Dorsolateral prefrontal cortex (tissue), 120 donors: ENCODE measurements at regions of chr12 and their contacts with region 1.

Region 1: DNA sequence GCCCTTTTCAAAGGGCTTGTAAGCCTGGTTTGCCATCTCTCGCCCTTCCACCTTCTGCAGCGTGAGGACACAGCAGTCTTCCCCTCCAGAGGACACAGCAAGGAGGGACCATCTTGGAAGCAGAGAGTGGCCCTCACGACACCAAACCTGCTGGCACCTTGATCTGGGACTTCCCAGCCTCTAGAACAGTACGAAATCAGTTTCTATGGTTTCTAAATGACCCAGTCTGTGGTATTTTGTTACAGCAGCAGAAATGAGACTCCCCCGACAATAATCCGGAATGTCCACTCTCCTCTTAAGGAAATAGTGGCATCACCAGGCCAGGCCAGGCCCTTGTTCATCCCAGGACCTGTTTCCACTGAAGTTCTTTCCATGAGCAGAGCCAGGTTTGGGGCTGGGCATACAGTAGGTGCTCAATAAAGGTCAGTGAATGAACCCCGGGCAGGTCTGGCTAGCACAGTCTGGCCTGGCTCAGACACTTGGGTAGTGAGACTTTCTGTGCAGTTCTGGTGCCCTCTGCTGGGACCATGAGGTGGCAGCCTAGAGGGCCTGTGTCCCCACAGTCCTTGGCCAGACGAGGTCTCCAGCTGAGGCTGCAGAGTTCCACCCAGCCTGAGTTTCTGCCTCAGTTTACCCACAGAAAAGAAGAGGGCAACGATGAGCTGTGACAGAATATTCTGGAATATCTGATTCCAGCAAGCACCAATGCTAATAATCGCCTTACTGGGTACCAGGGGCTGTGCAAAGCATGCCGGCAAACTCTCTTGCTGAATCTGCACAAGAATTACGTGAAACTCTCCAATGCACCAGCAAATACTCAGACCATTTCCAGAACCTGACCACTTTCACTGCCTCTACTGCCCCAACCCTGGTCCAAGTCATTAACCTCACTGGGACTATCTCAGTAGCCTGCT is 14.0 kb downstream of the ABCB9 start:
- DNase-seq: peak; percentile 65 to 86 (median 80)
- H3K4me3 ChIP-seq: no peak overlapping the region
- H3K27ac ChIP-seq: peak overlapping the region in 10 of 59 donors; percentile 5 to 28 (median 19)
- H3K27me3 ChIP-seq: no peaks in the 10 kb centered on the region
- CTCF ChIP-seq: peak; percentile 53 to 96 (median 89)

Region 2: GRCh38 chr12:122635471-122635870 is 316.8 kb before region 1 on chr12:
- intact Hi-C with region 1: loop called in 1 of 2 experiments (anchors 10 kb)
- DNase-seq: no peak
- H3K4me3 ChIP-seq: no peak overlapping the region
- H3K27ac ChIP-seq: peak overlapping the region in 1 of 59 donors; percentile 21
- H3K27me3 ChIP-seq: no peaks in the 10 kb centered on the region
- CTCF ChIP-seq: no peak

Region 3: DNA sequence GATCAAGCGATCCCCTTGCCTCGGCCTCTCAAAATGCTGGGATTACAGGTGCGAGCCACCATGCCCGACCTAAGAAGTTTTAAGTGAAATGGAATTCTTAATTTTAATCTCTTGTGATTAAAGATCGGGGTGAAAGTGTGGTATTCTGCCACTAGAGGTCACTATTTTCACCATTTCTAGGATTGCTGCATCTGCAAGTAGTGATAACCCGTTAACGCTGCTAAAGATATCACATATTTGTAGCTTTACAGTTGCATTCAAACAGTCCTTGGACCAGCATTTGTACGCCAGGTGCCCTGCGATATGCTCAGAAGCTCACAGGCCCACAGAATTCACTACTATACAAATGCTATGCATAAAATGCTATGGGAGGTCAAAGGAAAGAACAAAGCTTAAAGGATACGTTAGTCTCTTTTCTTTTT is 158.5 kb before region 1 on chr12:
- intact Hi-C with region 1: loop called (anchors 2 to 5 kb)
- DNase-seq: no peak
- H3K4me3 ChIP-seq: peak overlapping the region in 8 of 59 donors; percentile 15 to 44 (median 25)
- H3K27ac ChIP-seq: peak overlapping the region in 16 of 59 donors; percentile 1 to 78 (median 24)
- H3K27me3 ChIP-seq: no peaks in the 10 kb centered on the region
- CTCF ChIP-seq: peak; percentile 61 to 93 (median 83)

Region 4: DNA sequence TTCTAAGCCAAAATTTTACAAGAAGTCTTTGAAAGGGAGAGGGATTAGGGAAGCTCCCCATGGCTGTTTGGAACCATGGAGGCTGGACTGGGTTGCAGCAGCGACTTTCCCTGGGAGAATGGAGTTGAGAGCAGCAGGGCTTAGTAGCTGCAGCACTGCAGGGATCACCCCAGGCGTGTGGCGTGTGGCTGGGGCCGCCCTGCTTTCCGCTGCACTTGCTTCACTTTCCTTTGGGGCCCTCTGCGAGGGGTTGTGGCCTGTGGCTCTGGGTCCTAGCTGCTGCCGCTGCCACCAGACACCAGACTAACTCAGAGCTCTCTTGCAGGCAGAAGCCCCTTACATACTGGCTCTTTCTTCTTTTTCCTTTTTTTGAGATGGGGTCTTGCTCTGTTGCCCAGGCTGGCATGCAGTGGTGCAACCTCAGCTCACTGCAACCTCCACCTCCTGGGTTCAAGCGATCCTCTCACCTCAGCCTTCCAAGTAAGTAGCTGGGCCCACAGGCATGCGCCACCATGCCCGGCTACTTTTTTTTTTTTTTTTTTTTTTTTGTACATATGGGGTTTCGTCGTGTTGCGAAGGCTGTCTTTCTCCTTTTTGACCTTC is 152.5 kb before region 1 on chr12:
- intact Hi-C with region 1: loop called in 1 of 2 experiments (anchors 5 kb)
- DNase-seq: no peak
- H3K4me3 ChIP-seq: no peak overlapping the region
- H3K27ac ChIP-seq: no peak overlapping the region
- H3K27me3 ChIP-seq: no peaks in the 10 kb centered on the region
- CTCF ChIP-seq: no peak

Region 5: DNA sequence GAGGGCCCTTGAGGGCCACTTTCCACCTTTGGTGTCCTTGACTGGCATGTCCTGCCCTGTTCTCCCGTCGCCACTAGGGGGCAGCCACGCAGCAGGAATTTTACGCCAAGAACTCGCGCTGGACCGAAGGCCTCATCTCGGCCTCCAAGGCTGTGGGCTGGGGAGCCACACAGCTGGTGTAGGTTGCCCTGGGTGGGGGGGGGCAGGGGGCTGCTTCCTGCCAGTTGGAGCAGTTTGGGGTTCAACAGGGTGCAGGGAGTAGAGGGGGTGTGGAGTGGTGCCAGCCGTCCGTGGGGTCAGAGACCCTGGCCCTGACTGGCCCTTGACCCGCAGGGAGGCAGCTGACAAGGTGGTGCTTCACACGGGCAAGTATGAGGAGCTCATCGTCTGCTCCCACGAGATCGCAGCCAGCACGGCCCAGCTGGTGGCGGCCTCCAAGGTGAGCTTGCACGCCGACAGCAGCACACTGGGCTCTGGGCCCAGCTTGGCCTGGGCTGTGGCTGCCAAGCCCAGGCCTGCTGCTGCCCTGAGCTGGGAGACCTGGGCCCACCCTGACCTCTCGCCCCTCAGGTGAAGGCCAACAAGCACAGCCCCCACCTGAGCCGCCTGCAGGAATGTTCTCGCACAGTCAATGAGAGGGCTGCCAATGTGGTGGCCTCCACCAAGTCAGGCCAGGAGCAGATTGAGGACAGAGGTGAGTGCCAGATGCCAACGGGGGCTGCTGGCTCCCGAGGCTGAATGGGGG is 91.7 kb before region 1 on chr12:
- intact Hi-C with region 1: loop called (anchors 1 to 2 kb)
- DNase-seq: peak; percentile 85 to 91 (median 86)
- H3K4me3 ChIP-seq: no peak overlapping the region
- H3K27ac ChIP-seq: peak overlapping the region; percentile 30 to 99 (median 86)
- H3K27me3 ChIP-seq: no peaks in the 10 kb centered on the region
- CTCF ChIP-seq: peak; percentile 77 to 97 (median 92)

Region 6: DNA sequence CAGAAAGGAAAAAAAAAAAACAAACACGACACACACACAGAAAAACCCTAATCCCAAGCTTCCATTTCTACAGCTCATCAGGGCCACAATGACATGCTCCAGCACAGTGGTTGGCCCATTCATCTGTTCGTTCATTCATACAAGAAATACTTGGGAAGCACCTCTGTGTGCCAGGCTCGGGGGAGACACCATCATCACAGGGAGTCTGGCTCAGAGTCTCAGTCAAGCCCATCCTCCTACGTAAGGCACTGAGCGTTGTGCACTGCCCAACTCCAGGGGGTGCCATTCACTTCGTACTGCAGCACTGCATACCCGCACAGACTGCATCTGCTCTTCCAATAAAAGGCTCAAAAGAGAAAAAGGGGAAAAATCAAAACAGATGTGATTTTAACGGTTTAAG is 71.6 kb before region 1 on chr12:
- intact Hi-C with region 1: loop called in 1 of 2 experiments (anchors 5 kb)
- DNase-seq: peak in 9 of 10 donors; percentile 60 to 87 (median 84)
- H3K4me3 ChIP-seq: peak overlapping the region in 14 of 59 donors; percentile 2 to 34 (median 10)
- H3K27ac ChIP-seq: peak overlapping the region in 50 of 59 donors; percentile 3 to 76 (median 48)
- H3K27me3 ChIP-seq: no peaks in the 10 kb centered on the region
- CTCF ChIP-seq: peak in 55 of 56 donors; percentile 42 to 87 (median 73)

Region 7: DNA sequence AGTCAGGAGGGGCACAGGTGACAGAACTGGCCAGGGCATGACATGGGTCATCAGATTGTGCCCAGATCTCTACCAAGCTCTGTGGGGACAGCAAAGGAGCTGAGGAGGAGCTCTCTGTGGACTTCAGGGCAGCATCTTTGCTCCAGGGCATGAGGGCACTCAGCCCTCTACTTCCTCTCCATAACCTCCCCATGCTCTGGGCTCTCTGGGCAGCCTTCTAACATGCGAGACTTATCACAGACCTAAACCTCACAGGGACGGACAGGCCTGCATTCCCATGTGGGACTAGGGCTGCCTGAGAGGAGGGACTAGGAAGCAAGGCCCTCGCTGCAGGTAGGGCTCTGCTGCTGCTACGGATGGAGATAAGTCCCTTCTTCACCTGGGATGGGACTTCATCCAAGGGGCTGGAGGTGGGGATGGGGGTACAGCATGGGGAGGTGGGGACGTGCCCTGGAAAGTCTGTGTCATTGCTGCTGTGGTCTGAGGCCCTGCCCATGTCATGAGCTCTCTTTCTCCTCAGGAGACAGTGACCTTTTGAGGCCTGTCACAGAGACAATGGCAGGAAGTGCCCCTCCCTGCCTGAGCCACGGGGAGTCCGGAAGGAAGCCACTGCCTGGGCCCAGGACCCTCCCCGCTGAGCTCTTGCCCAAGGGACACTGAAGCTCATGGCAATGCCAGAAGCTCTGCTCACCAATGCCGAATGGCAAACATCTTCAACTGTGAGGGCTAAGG is 154.6 kb after region 1 on chr12:
- intact Hi-C with region 1: no loop called
- DNase-seq: no peak
- H3K4me3 ChIP-seq: no peak overlapping the region
- H3K27ac ChIP-seq: peak overlapping the region in 57 of 59 donors; percentile 2 to 95 (median 77)
- H3K27me3 ChIP-seq: no peaks in the 10 kb centered on the region
- CTCF ChIP-seq: no peak

Region 8: GRCh38 chr12:123163227-123163626 is 211.0 kb after region 1 on chr12:
- intact Hi-C with region 1: no loop called
- DNase-seq: no peak
- H3K4me3 ChIP-seq: no peak overlapping the region
- H3K27ac ChIP-seq: no peak overlapping the region
- H3K27me3 ChIP-seq: no peaks in the 10 kb centered on the region
- CTCF ChIP-seq: no peak